Sigmoid colon (tissue), 7 donors: ENCODE measurements at regions of chr5 and their contacts with region 1.

Region 1: DNA sequence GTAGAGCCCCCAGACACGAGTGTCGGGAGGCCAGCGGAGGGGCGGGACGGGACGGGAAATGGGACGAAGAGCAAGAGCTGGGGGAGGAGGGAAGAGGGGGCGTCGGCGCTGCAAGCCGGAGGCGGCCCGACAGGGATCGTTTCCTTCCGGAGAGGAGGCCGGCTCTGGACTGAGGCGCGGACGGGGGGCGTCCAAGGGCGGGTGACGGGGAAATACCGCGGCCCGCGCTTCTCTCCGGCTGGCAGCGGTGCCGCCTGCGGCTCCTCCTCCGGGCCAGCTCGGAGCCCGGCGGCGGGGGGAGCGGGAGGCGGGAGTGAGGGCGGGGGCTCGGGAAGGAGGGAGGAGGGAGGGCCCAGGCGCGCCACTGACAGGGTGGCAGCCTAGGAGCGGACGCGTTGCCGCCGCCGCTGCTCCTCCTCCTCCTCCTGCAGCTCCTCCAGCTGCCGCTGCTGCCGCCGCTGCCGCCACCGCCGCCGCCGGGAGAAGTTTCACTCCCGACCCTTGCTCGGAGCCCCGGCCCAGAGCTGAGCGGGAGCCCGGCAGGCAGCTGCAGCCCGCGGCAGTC is at the start of gene CHSY3:
- DNase-seq: peak; percentile 90
- H3K4me3 ChIP-seq: peak within 1 kb of the TSS; percentile 57 to 80 (median 70)
- H3K27ac ChIP-seq: peak within 1 kb of the TSS; percentile 73 to 81 (median 79)
- H3K4me1 ChIP-seq: peaks cover 0 to 28% (median 20%) of the 10 kb centered on the region in 4 donors
- H3K27me3 ChIP-seq: peaks cover 0 to 23% (median 0%) of the 10 kb centered on the region in 3 donors
- CTCF ChIP-seq: peak in 1 of 4 experiments; percentile 15
- EP300 ChIP-seq: no peak
- POLR2A ChIP-seq: no peak
- total RNA-seq, gene CHSY3: 0.99 to 3.3 (median 2.3) TPM

Region 2: GRCh38 chr5:129445379-129445778 is 458.8 kb before region 1 on chr5:
- intact Hi-C with region 1: no loop called
- DNase-seq: no peak
- H3K4me3 ChIP-seq: no peak overlapping the region
- H3K27ac ChIP-seq: no peak overlapping the region
- H3K4me1 ChIP-seq: peaks cover 0 to 7% (median 0%) of the 10 kb centered on the region in 4 donors
- H3K27me3 ChIP-seq: no peaks in the 10 kb centered on the region
- CTCF ChIP-seq: no peak
- EP300 ChIP-seq: no peak
- POLR2A ChIP-seq: no peak

Region 3: GRCh38 chr5:130141659-130142320 is 237.6 kb after region 1 on chr5:
- intact Hi-C with region 1: loop called (anchors 5 kb)
- DNase-seq: no peak
- H3K4me3 ChIP-seq: no peak overlapping the region
- H3K27ac ChIP-seq: no peak overlapping the region
- H3K4me1 ChIP-seq: peaks cover 0 to 20% (median 14%) of the 10 kb centered on the region in 4 donors
- H3K27me3 ChIP-seq: no peaks in the 10 kb centered on the region
- CTCF ChIP-seq: peak in 2 of 4 experiments; percentile 18 to 50
- EP300 ChIP-seq: no peak
- POLR2A ChIP-seq: no peak

Region 4: GRCh38 chr5:131109540-131110255 is 1205.5 kb after region 1 on chr5:
- intact Hi-C with region 1: loop called (anchors 10 kb)
- DNase-seq: no peak
- H3K4me3 ChIP-seq: no peak overlapping the region
- H3K27ac ChIP-seq: no peak overlapping the region
- H3K4me1 ChIP-seq: no peaks in the 10 kb centered on the region
- H3K27me3 ChIP-seq: no peaks in the 10 kb centered on the region
- CTCF ChIP-seq: peak in 3 of 4 experiments; percentile 57 to 60 (median 59)
- EP300 ChIP-seq: no peak
- POLR2A ChIP-seq: no peak

Region 5: GRCh38 chr5:131165119-131165727 is 1261.0 kb after region 1 on chr5 and contains the start of gene HINT1:
- intact Hi-C with region 1: loop called (anchors 2 kb)
- DNase-seq: peak; percentile 94
- H3K4me3 ChIP-seq: peak within 1 kb of the TSS; percentile 64 to 82 (median 71)
- H3K27ac ChIP-seq: peak within 1 kb of the TSS; percentile 93 to 94 (median 94)
- H3K4me1 ChIP-seq: peaks cover 0 to 30% (median 20%) of the 10 kb centered on the region in 4 donors
- H3K27me3 ChIP-seq: no peaks in the 10 kb centered on the region
- CTCF ChIP-seq: no peak
- EP300 ChIP-seq: no peak
- POLR2A ChIP-seq: peak; percentile 81 to 82
- total RNA-seq, gene HINT1: 135 to 261 (median 251) TPM

Region 6: DNA sequence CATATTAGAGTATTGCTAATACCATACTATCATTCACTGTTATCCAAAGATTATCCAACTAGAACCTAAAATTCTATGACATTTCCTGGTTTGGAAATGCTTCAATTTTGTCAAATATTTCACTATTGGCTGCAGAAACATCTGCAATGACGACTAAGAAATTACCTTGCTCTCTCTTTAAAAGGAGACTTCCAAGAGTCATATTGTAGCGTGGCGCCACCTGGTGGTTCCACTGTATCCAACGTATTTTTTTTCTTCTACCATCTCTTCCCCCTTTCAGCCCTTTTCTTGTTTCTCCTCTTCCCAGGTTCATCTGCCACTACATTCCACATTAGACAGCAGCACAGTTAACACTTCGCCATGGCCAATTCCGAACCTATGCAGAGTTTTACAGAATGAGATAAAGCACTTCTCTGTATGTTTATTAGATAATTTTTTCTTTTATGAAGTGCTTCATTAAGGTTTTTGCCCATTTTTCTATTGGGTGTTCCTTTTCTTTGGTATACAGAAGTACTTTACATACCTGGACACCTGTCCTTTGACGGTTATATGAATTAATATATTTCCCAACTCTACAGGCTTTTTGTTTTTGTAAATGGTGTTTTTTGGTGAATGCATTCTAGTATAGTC is 1513.2 kb after region 1 on chr5:
- intact Hi-C with region 1: loop called (anchors 5 kb)
- DNase-seq: peak; percentile 80
- H3K4me3 ChIP-seq: no peak overlapping the region
- H3K27ac ChIP-seq: no peak overlapping the region
- H3K4me1 ChIP-seq: no peaks in the 10 kb centered on the region
- H3K27me3 ChIP-seq: no peaks in the 10 kb centered on the region
- CTCF ChIP-seq: peak; percentile 42 to 77 (median 70)
- EP300 ChIP-seq: no peak
- POLR2A ChIP-seq: no peak